ENCODE measurements at regions of chr13 and their contacts with region 1.

Region 1: GRCh38 chr13:109869312-109870237 is 83.2 kb upstream of the IRS2 start:
- DNase-seq: peak; percentile 79 to 80
- ATAC-seq: peak; percentile 72 to 86 (median 82)
- H3K4me3 ChIP-seq: peak overlapping the region; percentile 56
- H3K27ac ChIP-seq: no peak overlapping the region
- H3K4me1 ChIP-seq: peaks cover 5% of the 10 kb centered on the region
- H3K27me3 ChIP-seq: no peaks in the 10 kb centered on the region
- CTCF ChIP-seq: no peak

Region 2: DNA sequence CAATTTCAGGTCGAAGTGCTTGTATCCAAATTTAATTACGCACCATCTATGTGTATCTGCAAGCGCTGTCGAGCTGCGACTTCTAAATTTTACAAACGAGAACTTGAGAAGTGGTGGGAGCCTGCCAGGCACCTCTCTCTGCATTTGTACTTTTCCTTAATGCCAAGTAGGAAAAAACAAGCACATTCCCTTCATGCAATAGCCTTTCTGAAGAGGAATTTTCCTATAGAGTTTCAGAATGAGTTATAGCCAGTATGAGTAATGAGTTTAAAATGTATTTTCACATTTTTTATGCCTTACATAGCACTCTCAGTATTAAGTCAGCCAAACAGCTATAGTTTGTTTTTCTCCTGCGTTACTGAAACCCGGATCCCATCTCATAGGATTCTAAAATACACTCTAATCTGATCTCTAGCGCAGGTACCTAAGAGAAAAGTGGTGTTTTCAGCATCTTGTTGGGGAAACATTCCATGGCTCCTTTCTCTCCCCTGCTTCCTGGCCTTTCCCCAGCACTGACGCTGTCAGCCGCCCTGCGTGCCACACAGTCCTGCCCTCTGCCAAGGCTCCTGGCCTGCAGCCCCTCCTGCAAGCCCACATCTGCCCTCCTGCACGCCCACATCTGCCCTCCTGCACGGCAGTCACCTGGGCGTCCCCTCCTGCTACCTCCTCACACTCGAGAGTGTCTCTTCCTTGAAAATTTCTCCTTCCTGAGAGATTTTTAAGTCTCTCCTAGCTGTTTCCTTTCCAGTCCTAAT is 713.2 kb before region 1 on chr13:
- intact Hi-C with region 1: loop called in 1 of 2 experiments (anchors 5 kb)
- DNase-seq: no peak
- ATAC-seq: peak; percentile 33 to 66 (median 48)
- H3K4me3 ChIP-seq: no peak overlapping the region
- H3K27ac ChIP-seq: no peak overlapping the region
- H3K4me1 ChIP-seq: peaks cover 10% of the 10 kb centered on the region
- H3K27me3 ChIP-seq: peaks cover 0 to 2% (median 0%) of the 10 kb centered on the region in 3 donors
- CTCF ChIP-seq: no peak

Region 3: GRCh38 chr13:109809216-109809932 is 60.2 kb before region 1 on chr13:
- intact Hi-C with region 1: loop called in 1 of 2 experiments (anchors 10 kb)
- DNase-seq: no peak
- ATAC-seq: no peak
- H3K4me3 ChIP-seq: no peak overlapping the region
- H3K27ac ChIP-seq: no peak overlapping the region
- H3K4me1 ChIP-seq: no peaks in the 10 kb centered on the region
- H3K27me3 ChIP-seq: peaks cover 0 to 5% (median 3%) of the 10 kb centered on the region in 3 donors
- CTCF ChIP-seq: no peak

Measured in psoas muscle (tissue), 8 donors.